ENCODE measurements at regions of chr2 and their contacts with region 1.

Region 1: GRCh38 chr2:23566236-23567142 is 181.5 kb downstream of the KLHL29 start:
- DNase-seq: peak in 9 of 14 experiments; percentile 3 to 42 (median 19)
- ATAC-seq: no peak
- H3K4me3 ChIP-seq: no peak overlapping the region
- H3K4me3 Mint-ChIP-seq: no peak overlapping the region
- H3K27ac ChIP-seq: no peak overlapping the region
- H3K27ac Mint-ChIP-seq: no peak overlapping the region
- H3K4me1 ChIP-seq: no peaks in the 10 kb centered on the region
- H3K4me1 Mint-ChIP-seq: no peaks in the 10 kb centered on the region
- H3K27me3 ChIP-seq: no peaks in the 10 kb centered on the region
- H3K27me3 Mint-ChIP-seq: no peaks in the 10 kb centered on the region
- CTCF ChIP-seq: peak; percentile 19

Region 2: GRCh38 chr2:23241106-23241505 is 325.4 kb before region 1 on chr2:
- CTCF ChIA-PET with region 1: no interaction called
- POLR2A ChIA-PET with region 1: no interaction called
- intact Hi-C with region 1: no loop called
- DNase-seq: no peak
- ATAC-seq: no peak
- H3K4me3 ChIP-seq: no peak overlapping the region
- H3K4me3 Mint-ChIP-seq: no peak overlapping the region
- H3K27ac ChIP-seq: no peak overlapping the region
- H3K27ac Mint-ChIP-seq: no peak overlapping the region
- H3K4me1 ChIP-seq: no peaks in the 10 kb centered on the region
- H3K4me1 Mint-ChIP-seq: no peaks in the 10 kb centered on the region
- H3K27me3 ChIP-seq: peaks cover 0 to 3% of the 10 kb centered on the region in 2 experiments
- H3K27me3 Mint-ChIP-seq: peaks cover 17% of the 10 kb centered on the region
- CTCF ChIP-seq: no peak

Region 3: DNA sequence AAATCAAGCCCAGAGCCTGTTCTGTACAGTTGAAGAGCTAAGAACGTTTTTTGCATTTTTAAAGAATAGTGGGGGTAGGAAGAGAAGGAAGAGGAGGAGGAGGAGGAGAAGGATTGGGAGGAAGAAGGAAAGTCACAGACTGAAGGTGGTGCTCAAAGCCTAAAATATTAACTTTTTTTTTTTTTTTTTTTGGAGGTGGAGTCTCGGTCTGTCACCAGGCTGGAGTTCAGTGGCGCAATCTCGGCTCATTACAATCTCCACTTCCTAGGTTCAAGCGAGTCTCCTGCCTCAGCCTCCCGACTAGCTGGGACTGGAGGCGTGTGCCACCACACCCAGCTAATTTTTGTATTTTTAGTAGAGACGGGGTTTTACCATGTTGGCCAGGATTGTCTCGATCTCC is 199.8 kb before region 1 on chr2:
- CTCF ChIA-PET with region 1: no interaction called
- POLR2A ChIA-PET with region 1: no interaction called
- intact Hi-C with region 1: loop called in 1 of 2 experiments (anchors 5 kb)
- DNase-seq: no peak
- ATAC-seq: no peak
- H3K4me3 ChIP-seq: no peak overlapping the region
- H3K4me3 Mint-ChIP-seq: no peak overlapping the region
- H3K27ac ChIP-seq: no peak overlapping the region
- H3K27ac Mint-ChIP-seq: no peak overlapping the region
- H3K4me1 ChIP-seq: no peaks in the 10 kb centered on the region
- H3K4me1 Mint-ChIP-seq: no peaks in the 10 kb centered on the region
- H3K27me3 ChIP-seq: peaks cover 9 to 27% of the 10 kb centered on the region in 2 experiments
- H3K27me3 Mint-ChIP-seq: peaks cover 56% of the 10 kb centered on the region
- CTCF ChIP-seq: no peak

Measured in CD4-positive, alpha-beta T cell (primary cell).